Astrocyte of the cerebellum (primary cell): ENCODE measurements at regions of chr1 and their contacts with region 1.

Region 1: GRCh38 chr1:155352631-155353030 is 31.9 kb downstream of the RUSC1 start:
- DNase-seq: no peak
- H3K4me3 ChIP-seq: no peak overlapping the region
- CTCF ChIP-seq: no peak

Region 2: DNA sequence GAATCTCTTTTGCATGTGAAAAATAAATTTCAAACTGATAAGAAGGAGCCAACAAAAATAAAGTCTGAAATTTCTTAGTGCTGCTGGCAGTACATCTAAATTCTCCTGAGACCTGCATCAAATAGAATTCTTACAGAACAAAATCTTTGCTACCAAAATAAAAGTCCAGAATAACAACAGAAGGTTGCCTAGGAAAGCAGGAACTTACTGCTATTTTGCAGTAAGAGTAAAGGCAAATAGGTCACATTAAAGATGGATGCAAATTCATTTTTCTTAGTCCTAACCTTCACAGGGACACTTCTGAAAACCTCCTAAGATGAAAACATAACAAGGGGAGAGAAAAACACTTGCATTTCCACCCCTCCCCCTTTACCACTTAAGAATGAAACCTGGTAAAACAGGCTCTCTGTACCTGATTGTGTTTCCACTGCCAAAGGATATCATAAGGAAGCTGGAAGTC is 27.0 kb after region 1 on chr1:
- in situ Hi-C with region 1: loop called (anchors 5 kb)
- DNase-seq: peak; percentile 74
- H3K4me3 ChIP-seq: no peak overlapping the region
- CTCF ChIP-seq: no peak